Right ventricle myocardium inferior (tissue), 1 donor: ENCODE measurements at regions of chr1 and their contacts with region 1.

Region 1: DNA sequence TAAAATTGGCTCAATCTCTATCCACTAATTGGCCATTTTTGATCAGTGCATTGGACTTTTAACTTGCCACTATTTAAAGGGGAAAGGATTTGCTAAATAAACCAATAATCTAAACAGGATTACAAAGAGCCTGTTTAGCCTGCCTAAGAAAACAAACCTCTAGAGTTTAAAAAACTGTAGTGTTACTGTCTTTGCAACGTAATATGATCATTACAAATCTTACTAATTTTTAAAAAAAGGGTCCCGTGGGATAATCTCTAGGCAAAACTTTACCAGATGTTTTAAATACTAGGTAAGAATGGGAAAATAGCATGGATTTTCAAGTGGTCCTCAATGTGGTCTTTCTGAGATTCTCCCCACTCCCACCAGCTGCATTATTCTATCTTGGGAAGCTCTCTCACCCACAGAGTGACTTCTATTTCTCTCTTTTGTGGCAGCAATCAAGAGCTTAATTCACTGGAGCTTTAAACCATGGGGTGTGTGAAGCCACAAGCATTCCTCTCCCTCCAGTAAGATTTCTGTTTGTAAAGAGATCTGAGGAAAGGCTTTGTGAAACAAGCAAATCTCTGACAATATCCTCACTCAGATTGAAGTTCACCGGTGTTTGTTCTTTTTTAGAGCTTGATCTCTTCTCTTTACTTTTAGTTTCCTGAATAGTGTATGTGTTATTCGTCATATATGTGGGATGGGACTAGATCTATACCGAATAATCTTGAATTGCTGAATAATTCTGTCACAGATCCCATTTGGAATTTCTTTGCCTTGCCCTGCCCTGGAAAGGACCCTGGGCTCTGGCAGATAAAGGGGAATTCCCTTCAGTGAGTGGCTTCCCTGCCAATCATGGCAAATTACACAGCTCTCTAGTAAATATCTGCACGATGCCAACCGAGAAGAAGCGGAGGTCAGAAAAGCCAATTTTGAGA is 132.2 kb downstream of the TLR5 start:
- DNase-seq: no peak
- ATAC-seq: no peak

Region 2: GRCh38 chr1:223652436-223652941 is 641.6 kb after region 1 on chr1:
- intact Hi-C with region 1: loop called (anchors 5 kb)
- DNase-seq: no peak
- ATAC-seq: no peak